HEK293 (cell line): ENCODE measurements at regions of chr1 and their contacts with region 1.

Region 1: GRCh38 chr1:13960375-13960987 is 260.5 kb downstream of the PRDM2 start:
- H3K4me3 ChIP-seq: no peak overlapping the region
- H3K27ac ChIP-seq: no peak overlapping the region
- H3K4me1 ChIP-seq: no peaks in the 10 kb centered on the region; the same call in 1 of the 2 replicates
- CTCF ChIP-seq: peak; percentile 84

Region 2: GRCh38 chr1:13828454-13829151 is 131.9 kb before region 1 on chr1:
- CTCF ChIA-PET with region 1: interaction called, 14 read pairs
- POLR2A ChIA-PET with region 1: no interaction called
- H3K4me3 ChIP-seq: peak overlapping the region; percentile 4; the same call in 1 of the 2 replicates
- H3K27ac ChIP-seq: no peak overlapping the region
- H3K4me1 ChIP-seq: no peaks in the 10 kb centered on the region
- CTCF ChIP-seq: peak; percentile 52; the same call in 1 of the 2 replicates

Region 3: DNA sequence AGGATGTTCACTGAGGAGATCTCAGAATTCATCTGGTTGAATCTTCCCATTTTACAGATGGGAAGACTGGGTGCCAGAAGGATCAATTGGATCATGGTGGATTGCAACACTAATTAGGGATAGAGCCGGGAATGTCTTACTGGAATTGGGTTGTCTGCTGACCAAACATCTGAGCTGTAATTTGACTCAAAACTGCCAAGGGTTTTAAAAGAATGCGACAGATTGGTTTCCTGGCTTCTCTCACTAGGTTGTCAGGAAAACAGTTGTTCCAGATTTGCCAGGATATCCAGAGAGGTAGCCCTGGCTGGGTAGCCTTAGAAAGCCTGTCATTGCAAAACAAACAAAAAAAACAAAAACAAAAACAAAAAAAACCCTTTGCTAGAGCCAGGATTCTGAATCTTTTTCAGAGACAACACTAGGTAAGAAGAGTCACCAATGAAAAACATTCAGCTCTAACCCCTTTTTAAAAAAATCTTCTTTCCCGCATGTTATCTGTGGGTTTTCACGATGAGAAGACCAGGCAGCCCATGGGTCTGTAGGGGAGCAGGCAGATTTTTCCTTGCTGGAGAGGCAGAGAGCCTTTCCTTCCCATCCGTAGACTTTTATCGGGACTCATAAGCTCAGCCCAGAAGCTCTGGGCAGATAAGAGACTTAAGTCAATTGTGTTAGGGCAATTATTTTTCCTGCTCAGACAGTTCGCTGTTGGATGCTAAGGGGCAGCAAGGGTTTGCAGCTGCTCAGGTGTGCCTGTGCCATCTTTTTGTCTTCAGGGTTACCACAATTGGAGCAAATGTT is 158.4 kb after region 1 on chr1:
- CTCF ChIA-PET with region 1: no interaction called
- POLR2A ChIA-PET with region 1: no interaction called
- H3K4me3 ChIP-seq: no peak overlapping the region
- H3K27ac ChIP-seq: no peak overlapping the region
- H3K4me1 ChIP-seq: no peaks in the 10 kb centered on the region
- CTCF ChIP-seq: no peak